Endothelial cell of umbilical vein (primary cell): ENCODE measurements at regions of chr19 and their contacts with region 1.

Region 1: GRCh38 chr19:57191141-57192076 is at the start of gene ZNF264:
- DNase-seq: peak; percentile 90
- H3K4me3 ChIP-seq: peak within 1 kb of the TSS; percentile 22 to 80 (median 77)
- H3K27ac ChIP-seq: peak within 1 kb of the TSS; percentile 40
- H3K4me1 ChIP-seq: peaks cover 3% of the 10 kb centered on the region
- H3K27me3 ChIP-seq: no peaks in the 10 kb centered on the region
- CTCF ChIP-seq: no peak
- POLR2A ChIP-seq: peak; percentile 87
- total RNA-seq, gene ZNF264: 18.2 and 20.5 TPM in 2 replicates

Region 2: GRCh38 chr19:57240311-57241090 is 49.1 kb after region 1 on chr19 and contains the start of gene ZNF805:
- CTCF ChIA-PET with region 1: no interaction called
- POLR2A ChIA-PET with region 1: no interaction called
- dilution Hi-C with region 1: no loop called
- intact Hi-C with region 1: loop called (anchors 1 kb)
- DNase-seq: peak; percentile 95
- H3K4me3 ChIP-seq: peak within 1 kb of the TSS; percentile 93 to 99 (median 96)
- H3K27ac ChIP-seq: peak within 1 kb of the TSS; percentile 66
- H3K4me1 ChIP-seq: peaks cover 6% of the 10 kb centered on the region
- H3K27me3 ChIP-seq: no peaks in the 10 kb centered on the region
- CTCF ChIP-seq: no peak
- POLR2A ChIP-seq: peak; percentile 44
- total RNA-seq, gene ZNF805: 8.6 and 8.7 TPM in 2 replicates